ENCODE measurements at regions of chr14 and their contacts with region 1.

Region 1: GRCh38 chr14:54691525-54692283 is 124.8 kb downstream of the SAMD4A start:
- DNase-seq: no peak
- H3K4me3 ChIP-seq: no peak overlapping the region
- H3K27me3 ChIP-seq: no peaks in the 10 kb centered on the region
- CTCF ChIP-seq: peak; percentile 92

Region 2: GRCh38 chr14:54566410-54567223 is 125.1 kb before region 1 on chr14 and contains the start of gene SAMD4A:
- CTCF ChIA-PET with region 1: interaction called, 17 read pairs
- POLR2A ChIA-PET with region 1: interaction called, 7 read pairs
- DNase-seq: no peak
- H3K4me3 ChIP-seq: peak within 1 kb of the TSS; percentile 86
- H3K27me3 ChIP-seq: no peaks in the 10 kb centered on the region
- CTCF ChIP-seq: peak; percentile 46; the same call in 1 of the 2 replicates
- polyA plus RNA-seq, gene SAMD4A: 13.4 and 16.9 TPM in 2 replicates

Region 3: DNA sequence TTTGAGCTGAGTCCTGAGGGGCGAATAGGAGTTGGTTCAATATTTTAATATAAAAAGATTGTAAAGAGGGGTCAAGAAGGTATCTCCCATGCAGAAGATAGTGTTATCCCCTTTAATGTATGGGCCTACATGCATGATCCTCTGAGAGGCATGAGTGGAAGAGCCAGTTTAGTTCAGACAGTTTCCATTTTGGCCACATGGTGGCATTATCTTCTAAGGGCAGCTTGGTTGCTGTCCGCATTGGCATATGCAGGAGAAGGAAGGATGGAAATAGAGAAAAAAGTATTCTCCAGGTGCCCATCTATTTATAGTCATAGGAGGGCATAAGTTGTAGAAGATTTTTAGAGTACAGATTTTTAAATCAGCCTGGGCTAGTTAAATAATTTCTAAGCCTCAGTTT is 119.4 kb before region 1 on chr14:
- CTCF ChIA-PET with region 1: interaction called, 7 read pairs
- POLR2A ChIA-PET with region 1: interaction called, 11 read pairs
- DNase-seq: no peak
- H3K4me3 ChIP-seq: no peak overlapping the region
- H3K27me3 ChIP-seq: no peaks in the 10 kb centered on the region
- CTCF ChIP-seq: peak; percentile 47

Region 4: DNA sequence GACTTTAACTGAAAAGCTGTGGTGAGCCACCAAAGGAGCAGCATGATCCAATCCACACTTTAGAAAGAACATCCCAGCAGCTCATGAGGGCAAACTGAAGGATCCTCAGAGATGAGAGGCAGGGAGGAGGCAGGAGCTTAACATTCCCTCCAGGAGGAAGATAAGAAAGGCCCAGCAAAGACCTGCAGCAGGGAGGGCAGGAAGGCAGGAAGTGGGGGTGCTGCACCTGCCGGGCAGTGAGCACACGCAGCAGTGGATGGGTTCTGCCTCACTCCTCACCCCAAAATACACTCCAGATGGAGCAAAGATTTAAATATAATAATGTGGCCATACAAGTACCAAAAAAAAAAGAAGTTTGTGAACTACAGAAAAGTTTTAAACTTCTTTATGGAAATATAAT is 162.5 kb after region 1 on chr14:
- CTCF ChIA-PET with region 1: no interaction called
- POLR2A ChIA-PET with region 1: no interaction called
- DNase-seq: no peak
- H3K4me3 ChIP-seq: no peak overlapping the region
- H3K27me3 ChIP-seq: peaks cover 1% of the 10 kb centered on the region; the same call in 1 of the 2 replicates
- CTCF ChIP-seq: no peak

Measured in BJ (cell line).